PC-9 (cell line): ENCODE measurements at regions of chr7 and their contacts with region 1.

Region 1: DNA sequence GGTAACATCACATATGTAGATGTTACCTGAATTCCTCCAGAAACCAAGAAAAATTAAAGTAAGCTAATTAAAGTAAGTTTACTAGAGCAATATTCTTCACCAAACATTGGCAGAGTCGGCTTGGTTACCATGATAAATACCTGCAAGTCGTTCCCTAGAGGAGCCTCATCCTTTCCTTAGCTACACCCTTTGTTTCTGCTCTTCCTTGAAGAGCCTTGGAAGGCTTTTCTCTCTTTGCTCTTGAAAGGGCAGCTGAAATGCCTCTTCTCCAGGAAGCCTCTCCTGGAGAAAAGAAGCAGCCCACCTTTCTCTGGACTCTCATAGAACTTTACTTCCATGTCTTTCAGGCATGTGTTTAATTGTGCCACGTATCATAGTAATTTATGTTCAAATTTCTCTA is 34.9 kb upstream of the CALD1 start:
- DNase-seq: no peak
- H3K4me3 ChIP-seq: no peak overlapping the region
- H3K27ac ChIP-seq: no peak overlapping the region
- H3K4me1 ChIP-seq: no peaks in the 10 kb centered on the region
- H3K27me3 ChIP-seq: no peaks in the 10 kb centered on the region
- CTCF ChIP-seq: no peak

Region 2: DNA sequence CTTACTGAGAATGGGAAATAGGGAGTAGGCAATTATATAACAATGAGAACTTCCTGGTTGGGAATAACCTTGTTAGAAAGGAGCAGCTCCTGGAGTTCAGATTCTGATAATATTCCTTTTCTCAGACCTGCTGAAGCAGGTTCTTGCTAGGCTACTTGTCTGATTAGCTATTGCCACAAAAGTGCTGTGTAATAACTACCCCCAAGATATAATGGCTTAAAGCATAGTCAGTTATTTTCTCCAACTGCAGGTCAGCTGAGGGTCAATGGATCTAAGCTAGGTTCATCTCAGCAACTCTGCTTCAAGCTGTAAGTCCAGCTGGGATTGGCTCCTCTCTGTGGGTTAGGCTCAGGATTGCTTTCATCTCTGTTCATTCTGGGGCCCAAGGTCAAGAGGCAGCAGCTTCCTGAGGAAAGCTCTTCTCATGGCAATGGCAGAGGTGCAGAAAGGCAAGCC is 774.7 kb after region 1 on chr7:
- CTCF ChIA-PET with region 1: no interaction called
- POLR2A ChIA-PET with region 1: interaction called, 10 read pairs
- intact Hi-C with region 1: no loop called
- DNase-seq: no peak
- H3K4me3 ChIP-seq: no peak overlapping the region
- H3K27ac ChIP-seq: no peak overlapping the region
- H3K4me1 ChIP-seq: no peaks in the 10 kb centered on the region
- H3K27me3 ChIP-seq: no peaks in the 10 kb centered on the region
- CTCF ChIP-seq: no peak